ENCODE measurements at regions of chr16 and their contacts with region 1.

Region 1: DNA sequence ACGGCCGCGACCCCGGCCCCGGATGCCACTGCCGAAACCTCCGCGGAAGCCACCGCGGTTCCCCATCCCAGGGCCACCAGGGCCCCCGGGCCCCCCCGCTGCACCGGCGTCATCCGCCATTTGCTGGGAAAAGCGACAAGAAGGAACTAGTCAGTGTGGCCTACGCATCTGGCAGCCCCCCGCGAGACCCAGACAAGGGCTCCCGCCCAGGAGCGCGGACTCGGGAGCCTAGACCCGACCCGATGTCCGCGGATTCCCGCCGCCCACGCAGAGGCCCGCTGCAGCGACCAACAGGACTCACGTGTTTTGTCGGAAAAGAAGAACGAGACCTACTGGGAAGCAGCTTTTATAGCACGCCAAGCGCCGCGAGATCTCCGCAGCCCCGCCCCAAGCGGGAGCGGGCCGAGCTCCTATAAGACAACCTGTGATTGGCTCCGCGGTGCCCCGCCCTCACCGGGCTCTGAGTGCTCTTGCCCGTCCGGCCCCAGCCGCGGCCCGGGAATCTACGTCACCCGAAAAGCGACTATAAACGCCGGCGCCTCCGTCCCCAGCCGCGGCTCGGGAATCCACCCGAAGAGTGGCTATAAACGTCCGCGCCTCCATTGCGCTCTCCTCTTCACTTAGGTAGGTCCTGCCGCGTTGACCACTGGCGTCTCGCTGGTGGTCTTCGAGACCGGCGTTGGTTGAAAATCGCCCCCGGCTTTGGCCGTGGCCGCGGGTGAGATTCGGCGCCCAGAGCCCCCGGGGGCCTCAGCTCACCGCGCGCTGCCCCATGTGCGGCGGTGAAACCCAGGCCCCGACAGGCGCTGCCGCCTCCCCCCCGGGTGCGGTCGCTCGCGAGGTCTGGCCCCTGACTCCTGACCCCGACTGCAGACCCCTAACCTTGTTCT is at the start of gene RPS2:
- DNase-seq: peak; percentile 100

Region 2: DNA sequence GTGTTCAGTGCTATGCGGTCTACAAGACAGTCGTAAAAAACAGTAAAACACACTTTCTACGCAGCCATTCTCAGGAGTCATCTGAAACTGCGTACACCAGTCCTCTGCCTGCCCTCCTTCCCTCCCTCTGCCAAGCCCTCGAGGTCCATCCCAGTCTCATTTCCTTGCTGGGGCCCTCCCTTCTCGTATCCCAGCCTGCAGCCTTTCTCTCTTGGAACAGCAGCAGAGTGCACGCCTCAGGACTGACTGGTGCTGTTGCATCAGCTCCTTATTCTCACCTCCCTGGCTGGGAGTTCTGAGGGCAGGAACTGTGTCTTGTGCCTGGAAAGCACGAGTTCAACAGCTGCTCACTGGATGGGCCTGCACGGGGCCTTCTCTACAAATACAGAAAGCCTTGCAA is 125.2 kb before region 1 on chr16:
- CTCF ChIA-PET with region 1: no interaction called
- POLR2A ChIA-PET with region 1: interaction called, 15 read pairs
- DNase-seq: peak; percentile 49

Region 3: DNA sequence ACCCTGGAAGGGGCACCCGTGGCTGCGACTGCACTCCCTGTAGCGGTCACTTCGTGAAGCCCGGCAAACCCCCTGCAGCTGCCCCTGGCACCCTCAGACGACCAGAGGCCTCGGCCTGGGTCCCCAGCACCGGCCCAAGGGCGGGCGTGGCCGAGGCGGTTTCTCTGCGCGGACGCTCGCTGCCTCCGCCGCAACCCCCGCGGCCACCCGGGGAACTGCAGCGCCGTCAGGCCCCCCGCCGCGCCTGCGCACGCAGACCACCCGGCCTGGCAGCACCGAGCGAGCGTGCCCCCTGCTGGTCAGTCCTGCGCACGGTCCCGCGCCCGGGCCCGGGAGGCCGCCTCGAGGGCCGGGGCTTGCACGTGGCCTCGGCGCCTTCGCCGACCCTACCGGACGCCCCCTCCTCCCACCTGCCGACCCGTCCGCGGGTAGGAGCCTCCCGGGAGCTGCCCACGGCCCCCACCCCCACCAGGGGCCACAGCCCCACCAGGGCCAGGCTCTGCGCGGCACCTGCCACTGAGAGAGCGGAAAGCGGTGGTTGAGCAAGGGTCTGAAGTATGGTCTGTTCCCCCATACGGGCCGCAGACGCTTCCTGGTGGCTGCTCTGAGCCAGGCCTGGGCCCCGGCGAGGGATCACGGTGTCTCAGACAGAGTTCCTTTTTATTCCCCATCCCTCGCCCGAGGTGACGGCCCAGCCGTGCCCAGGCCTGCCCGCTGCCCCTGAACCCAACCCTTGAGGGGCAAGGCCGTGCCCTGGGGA is 35.0 kb before region 1 on chr16:
- CTCF ChIA-PET with region 1: interaction called, 3 read pairs
- POLR2A ChIA-PET with region 1: interaction called, 18 read pairs
- DNase-seq: peak; percentile 99

Region 4: DNA sequence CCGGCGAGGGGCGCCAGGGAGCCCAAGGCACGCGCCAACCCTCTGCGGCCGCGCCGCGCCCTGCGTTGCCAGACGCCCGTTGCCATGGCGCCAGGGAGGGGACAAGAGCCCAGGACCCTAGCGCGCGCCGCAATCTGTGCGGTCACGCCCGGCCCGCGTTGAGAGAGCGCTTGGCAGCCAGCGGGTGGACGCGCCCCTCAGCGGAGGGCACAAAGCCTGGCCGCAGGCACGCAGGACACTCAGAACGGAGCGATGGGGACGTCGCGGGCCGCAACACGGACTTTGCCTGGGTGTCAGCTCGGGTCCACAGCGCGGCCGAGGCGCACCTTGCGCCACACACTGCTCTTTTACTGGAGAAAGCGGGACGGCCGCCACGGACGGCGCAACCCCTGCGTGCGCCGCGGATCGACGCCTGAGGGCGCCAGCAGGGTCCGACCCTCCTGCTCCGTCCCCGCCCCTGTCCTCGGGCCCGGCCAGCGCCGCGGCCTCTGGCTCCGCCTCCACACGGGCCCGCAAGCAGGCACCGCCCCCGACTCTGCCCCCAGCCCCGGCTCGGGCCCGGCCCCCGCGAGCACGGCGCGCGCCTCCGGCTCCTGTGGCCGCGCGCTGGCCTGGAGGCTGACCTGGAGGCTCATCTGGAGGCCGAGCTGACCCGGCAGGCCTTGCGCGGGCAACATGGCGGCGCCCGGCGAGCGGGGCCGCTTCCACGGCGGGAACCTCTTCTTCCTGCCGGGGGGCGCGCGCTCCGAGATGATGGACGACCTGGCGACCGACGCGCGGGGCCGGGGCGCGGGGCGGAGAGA is 19.0 kb after region 1 on chr16 and contains the start of gene GFER:
- CTCF ChIA-PET with region 1: no interaction called
- POLR2A ChIA-PET with region 1: interaction called, 88 read pairs
- DNase-seq: peak; percentile 93

Region 5: DNA sequence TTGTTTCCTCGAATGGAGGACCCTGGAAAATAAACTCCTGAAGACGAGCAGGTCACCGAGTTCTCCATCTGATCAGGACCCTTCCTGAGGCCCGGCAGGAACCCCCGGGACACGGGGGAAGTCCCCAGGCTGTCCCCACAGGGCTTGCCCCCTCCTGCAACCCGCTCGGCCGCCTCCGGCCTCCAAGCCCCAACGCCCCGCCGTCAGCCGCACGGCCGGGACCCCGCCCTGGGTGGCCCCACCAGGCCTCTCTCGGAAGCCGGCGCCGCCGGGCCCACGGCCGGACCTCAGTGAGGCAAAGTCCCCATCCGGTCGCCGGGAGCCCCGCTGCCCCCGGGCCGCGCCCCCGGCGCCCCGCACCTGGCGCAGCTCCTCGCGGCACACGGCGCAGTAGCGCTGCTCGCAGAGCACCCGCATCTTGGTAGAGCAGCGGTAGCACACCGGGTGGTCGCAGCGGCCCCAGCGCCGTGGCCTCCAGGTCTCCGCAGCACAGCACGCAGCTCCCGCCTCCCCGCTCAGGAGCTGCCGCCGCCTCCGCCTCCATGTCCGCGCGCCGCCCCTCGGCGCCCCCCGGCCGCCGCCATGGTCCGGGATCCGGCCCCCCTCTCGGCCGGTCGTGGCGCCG is 44.5 kb after region 1 on chr16:
- CTCF ChIA-PET with region 1: no interaction called
- POLR2A ChIA-PET with region 1: interaction called, 23 read pairs
- DNase-seq: no peak

Region 6: DNA sequence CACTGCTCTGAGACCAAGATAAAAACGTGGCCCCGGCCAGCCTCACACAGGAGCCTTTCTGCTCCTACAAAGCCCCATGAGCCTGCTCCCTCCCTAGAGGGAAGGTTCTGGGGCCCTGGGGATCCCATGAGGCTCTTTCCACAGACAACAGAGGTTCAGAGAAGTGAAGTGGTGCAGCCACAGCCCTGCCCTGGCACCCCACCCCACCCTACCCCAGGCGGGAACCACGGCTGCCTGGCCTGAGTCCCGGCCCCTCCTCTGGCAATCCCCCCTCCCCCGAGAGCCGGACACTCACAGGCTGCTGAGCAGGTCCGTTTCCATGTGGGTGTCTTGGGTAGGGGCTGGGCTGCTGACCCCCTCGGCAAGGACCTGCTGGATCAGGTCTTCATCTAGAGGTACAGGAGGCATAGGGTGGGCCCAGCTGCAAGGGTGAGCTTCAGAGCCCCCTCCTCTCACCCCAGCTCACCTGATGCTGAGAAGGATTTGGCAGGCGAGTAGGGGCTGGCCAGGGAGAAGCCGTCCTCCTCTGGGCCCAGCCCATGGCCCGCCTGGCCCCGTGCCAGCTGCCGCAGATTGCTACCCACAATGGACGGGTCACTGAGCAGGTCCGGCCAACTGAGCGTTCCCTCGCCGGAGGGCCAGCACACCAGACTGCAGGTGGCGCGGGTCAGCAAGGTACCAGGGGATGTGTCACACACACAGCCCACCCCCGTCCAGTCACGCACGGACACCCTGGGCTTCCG is 132.3 kb after region 1 on chr16:
- CTCF ChIA-PET with region 1: no interaction called
- POLR2A ChIA-PET with region 1: no interaction called
- DNase-seq: no peak

Measured in HEK293T (cell line).